Activated T-helper 2 cell treated with anti-CD3 and anti-CD28 coated beads, Interferon-gamma antibody, Interleukin-2, Interleukin-4, amounts not matched to agents 10 μg/mL and 5 μg/mL and 100 μg/mL, durations not matched to agents 14 hours and 24 hours and 36 hours (primary cell): ENCODE measurements at regions of chr12 and their contacts with region 1.

Region 1: GRCh38 chr12:56333679-56334489 is at the start of gene PAN2:
- DNase-seq: peak; percentile 93
- H3K4me3 Mint-ChIP-seq: peak within 1 kb of the TSS; percentile 96
- H3K27ac Mint-ChIP-seq: peak within 1 kb of the TSS; percentile 100
- H3K4me1 Mint-ChIP-seq: peaks cover 38% of the 10 kb centered on the region
- H3K27me3 Mint-ChIP-seq: no peaks in the 10 kb centered on the region
- total RNA-seq, gene PAN2: 28.7 and 28.9 TPM in 2 replicates

Region 2: DNA sequence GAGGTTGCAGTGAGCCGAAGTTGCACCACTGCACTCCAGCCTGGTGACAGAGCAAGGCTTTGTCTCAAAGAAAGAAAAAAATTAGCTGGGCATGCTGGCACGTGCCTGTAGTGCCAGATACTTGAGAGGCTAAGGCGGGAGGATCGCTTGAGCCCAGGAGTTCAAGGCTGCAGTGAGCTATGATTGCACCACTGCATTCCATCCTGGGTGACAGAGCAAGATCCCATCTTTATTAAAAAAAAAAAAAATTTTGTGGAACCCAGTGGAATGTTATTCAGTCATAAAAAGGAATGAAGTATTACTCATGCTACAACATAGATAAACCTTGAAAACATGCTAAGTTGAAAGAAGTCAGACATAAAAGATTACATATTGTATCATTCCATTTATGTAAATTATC is 262.2 kb before region 1 on chr12:
- intact Hi-C with region 1: no loop called
- DNase-seq: no peak
- H3K4me3 Mint-ChIP-seq: no peak overlapping the region
- H3K27ac Mint-ChIP-seq: no peak overlapping the region
- H3K4me1 Mint-ChIP-seq: peaks cover 7% of the 10 kb centered on the region
- H3K27me3 Mint-ChIP-seq: peaks cover 2% of the 10 kb centered on the region

Region 3: DNA sequence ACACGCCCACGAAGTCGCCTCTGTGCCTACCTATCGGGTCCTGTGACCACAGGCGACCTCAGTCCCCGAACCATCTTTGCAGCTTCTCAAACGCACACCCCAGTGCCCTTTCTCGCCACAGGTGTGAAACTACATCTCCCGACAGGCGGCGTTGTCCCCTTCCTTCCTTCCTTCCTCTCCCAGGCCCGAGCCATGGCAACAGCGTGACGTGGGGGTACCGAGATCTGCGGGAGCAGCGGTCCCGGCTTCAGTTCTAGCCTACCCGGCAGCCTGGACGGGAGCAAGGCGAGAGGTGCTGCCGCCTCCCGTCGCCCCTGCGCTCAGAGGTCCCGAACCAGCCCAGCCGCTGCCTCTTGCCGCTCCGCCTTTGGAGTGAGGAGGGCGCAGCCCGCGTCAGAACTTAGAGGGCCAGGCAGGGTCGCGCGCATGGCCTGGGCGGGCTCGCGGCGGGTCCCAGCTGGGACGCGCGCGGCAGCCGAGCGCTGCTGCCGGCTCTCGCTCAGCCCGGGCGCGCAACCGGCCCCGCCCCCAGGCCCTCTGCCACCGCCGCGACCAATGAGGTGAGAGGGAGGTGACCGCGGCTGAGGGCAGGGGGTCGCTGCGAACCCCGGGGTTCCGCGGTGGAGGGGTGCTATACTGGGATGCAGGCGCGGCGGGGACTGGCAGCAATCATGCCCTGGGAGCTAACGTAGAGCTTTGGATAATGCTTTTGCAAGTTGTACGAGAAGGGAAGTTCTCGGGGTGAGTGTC is 67.0 kb before region 1 on chr12 and contains the start of gene COQ10A:
- intact Hi-C with region 1: loop called (anchors 1 kb)
- DNase-seq: peak; percentile 85
- H3K4me3 Mint-ChIP-seq: peak within 1 kb of the TSS; percentile 96
- H3K27ac Mint-ChIP-seq: peak within 1 kb of the TSS; percentile 87
- H3K4me1 Mint-ChIP-seq: peaks cover 17% of the 10 kb centered on the region
- H3K27me3 Mint-ChIP-seq: no peaks in the 10 kb centered on the region
- total RNA-seq, gene COQ10A: 15.9 and 17.0 TPM in 2 replicates

Region 4: DNA sequence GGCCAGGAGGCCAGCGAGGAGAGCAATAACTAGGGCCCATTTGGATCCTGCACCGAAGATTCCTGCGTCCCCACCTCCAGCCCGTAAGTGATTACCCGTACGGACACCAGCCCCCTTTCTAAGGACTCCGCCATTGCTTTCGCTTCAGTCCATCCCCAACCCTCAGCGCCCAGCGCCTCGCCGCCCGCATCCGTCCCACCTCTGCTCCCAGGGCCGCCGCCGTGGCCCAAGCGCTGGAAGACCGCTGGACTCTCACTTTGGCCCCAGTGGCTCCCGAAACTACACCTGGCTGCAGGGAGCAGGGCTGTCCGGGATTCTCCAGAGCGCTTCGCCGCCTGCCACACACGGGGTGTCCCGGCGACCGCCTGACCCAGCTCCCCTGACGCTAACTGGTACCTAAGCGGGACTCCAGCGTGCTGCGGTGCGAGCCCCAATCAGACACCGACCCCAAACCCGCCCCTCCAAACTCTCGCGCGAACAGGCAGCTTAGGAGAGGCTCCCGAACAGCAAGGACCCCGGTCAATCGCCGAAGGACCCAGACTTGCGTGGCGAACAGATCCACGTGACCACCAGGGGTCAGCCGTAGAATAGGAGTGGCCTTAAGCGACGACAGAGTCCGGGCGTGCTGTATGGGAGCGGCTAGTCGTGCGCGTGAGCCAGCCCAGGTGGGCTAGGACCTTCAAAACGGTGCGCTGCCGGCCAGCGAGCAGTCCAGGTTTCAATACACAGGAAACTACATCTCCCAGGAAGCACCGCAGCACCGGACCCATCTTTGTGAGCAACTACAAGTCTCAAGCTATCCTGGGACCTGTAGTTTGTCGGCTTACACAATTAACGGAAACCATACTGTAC is 18.0 kb before region 1 on chr12 and contains the start of gene CNPY2:
- intact Hi-C with region 1: loop called (anchors 1 kb)
- DNase-seq: peak; percentile 88
- H3K4me3 Mint-ChIP-seq: peak within 1 kb of the TSS; percentile 99
- H3K27ac Mint-ChIP-seq: peak within 1 kb of the TSS; percentile 98
- H3K4me1 Mint-ChIP-seq: peaks cover 6% of the 10 kb centered on the region
- H3K27me3 Mint-ChIP-seq: no peaks in the 10 kb centered on the region
- total RNA-seq, gene CNPY2: 160 and 165 TPM in 2 replicates

Region 5: GRCh38 chr12:56437430-56438176 is 103.7 kb after region 1 on chr12:
- intact Hi-C with region 1: no loop called
- DNase-seq: no peak
- H3K4me3 Mint-ChIP-seq: no peak overlapping the region
- H3K27ac Mint-ChIP-seq: no peak overlapping the region
- H3K4me1 Mint-ChIP-seq: peaks cover 1% of the 10 kb centered on the region
- H3K27me3 Mint-ChIP-seq: no peaks in the 10 kb centered on the region

Region 6: DNA sequence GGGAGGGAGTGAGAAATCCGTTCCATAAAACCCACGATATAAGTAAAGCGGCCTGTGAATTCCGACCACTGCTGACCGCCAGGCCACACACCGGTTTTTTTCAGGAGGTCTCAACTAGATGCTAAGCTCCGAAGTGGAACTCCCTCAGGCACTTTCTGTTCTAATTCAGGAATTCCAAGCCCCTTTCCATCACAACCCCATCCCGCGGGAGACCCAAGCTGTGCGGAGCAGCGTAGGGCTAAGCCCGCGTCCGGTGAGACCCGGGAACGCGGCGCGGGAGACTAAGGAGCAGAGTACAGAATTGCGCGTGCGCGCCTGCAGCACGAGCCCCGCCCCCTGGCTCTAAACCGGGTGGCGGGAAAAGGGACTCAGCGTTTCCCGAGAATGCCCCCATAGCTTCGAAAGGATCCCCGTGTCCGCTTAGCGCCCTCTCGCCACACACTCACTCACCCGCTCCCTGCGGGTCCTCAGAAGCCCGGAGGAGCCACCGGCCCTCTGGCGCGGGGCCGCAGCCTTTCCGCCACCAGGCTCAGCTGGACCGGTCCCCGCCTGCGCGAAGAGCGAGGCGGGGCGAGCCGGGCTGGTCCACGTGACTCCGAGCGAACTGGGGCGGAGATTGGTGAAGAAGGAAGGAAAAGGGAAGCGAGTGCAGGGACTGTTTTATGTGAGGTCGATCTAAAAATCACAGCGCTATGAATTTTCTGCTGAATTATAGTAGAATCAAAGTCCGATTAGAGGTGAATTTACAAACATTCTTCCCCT is 115.2 kb after region 1 on chr12 and contains the start of gene TIMELESS:
- intact Hi-C with region 1: loop called (anchors 5 kb)
- DNase-seq: peak; percentile 88
- H3K4me3 Mint-ChIP-seq: peak within 1 kb of the TSS; percentile 86
- H3K27ac Mint-ChIP-seq: peak within 1 kb of the TSS; percentile 86
- H3K4me1 Mint-ChIP-seq: peaks cover 24% of the 10 kb centered on the region
- H3K27me3 Mint-ChIP-seq: no peaks in the 10 kb centered on the region
- total RNA-seq, gene TIMELESS: 43.7 and 45.6 TPM in 2 replicates

Region 7: DNA sequence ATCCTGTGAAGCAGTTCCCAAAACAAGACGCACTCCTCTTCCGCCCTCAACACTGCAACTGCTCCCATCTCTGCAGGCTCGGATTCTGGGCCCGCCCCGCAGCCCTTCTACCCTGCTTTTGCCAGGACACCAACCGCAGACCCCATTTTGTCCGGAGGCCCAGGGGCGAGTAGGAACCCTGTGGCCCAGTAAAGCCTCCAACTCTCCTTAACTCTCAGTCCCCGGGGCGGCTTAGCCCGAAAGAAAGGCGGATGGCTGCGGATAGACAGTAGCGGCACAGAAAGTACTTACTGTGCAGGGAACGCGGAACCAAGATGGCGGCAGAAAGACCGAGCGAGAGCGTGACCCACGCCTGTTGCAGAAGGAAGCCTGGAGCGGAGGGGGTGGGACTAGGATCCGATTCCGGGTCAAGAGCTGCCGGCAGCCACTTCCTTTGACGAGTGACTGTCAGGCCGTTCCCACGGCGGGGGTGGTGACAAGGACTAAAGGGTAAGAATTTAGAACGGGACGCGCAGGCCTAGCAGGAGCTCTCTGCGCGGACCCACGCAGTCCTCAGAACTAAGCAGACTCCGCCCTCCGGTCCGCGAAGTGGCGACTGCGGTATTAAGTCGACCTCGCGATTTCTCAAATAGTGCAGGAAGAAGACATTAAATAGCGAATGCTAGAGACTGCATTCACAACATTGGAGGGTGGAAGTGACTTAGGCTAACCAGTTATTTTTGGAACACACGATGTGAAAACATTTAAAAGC is 391.3 kb after region 1 on chr12 and contains the start of gene NACA:
- intact Hi-C with region 1: loop called (anchors 5 kb)
- DNase-seq: peak; percentile 98
- H3K4me3 Mint-ChIP-seq: peak within 1 kb of the TSS; percentile 96
- H3K27ac Mint-ChIP-seq: peak within 1 kb of the TSS; percentile 96
- H3K4me1 Mint-ChIP-seq: peaks cover 39% of the 10 kb centered on the region
- H3K27me3 Mint-ChIP-seq: no peaks in the 10 kb centered on the region
- total RNA-seq, gene NACA: 1,037 and 1,093 TPM in 2 replicates

Region 8: GRCh38 chr12:56808954-56809353 is 475.1 kb after region 1 on chr12:
- intact Hi-C with region 1: no loop called
- DNase-seq: no peak
- H3K4me3 Mint-ChIP-seq: no peak overlapping the region
- H3K27ac Mint-ChIP-seq: no peak overlapping the region
- H3K4me1 Mint-ChIP-seq: no peaks in the 10 kb centered on the region
- H3K27me3 Mint-ChIP-seq: no peaks in the 10 kb centered on the region

Region 9: GRCh38 chr12:57430931-57431720 is 1097.2 kb after region 1 on chr12 and contains the start of gene R3HDM2:
- intact Hi-C with region 1: no loop called
- DNase-seq: peak; percentile 91
- H3K4me3 Mint-ChIP-seq: peak within 1 kb of the TSS; percentile 93
- H3K27ac Mint-ChIP-seq: peak within 1 kb of the TSS; percentile 97
- H3K4me1 Mint-ChIP-seq: peaks cover 30% of the 10 kb centered on the region
- H3K27me3 Mint-ChIP-seq: no peaks in the 10 kb centered on the region
- total RNA-seq, gene R3HDM2: 44.9 and 46.9 TPM in 2 replicates